Activated CD4-positive, alpha-beta memory T cell treated with anti-CD3 and anti-CD28 coated beads, Interleukin-2, amount 10 ng/mL, durations not matched to agents 7 days and 5 days (primary cell): ENCODE measurements at regions of chr9 and their contacts with region 1.

Region 1: DNA sequence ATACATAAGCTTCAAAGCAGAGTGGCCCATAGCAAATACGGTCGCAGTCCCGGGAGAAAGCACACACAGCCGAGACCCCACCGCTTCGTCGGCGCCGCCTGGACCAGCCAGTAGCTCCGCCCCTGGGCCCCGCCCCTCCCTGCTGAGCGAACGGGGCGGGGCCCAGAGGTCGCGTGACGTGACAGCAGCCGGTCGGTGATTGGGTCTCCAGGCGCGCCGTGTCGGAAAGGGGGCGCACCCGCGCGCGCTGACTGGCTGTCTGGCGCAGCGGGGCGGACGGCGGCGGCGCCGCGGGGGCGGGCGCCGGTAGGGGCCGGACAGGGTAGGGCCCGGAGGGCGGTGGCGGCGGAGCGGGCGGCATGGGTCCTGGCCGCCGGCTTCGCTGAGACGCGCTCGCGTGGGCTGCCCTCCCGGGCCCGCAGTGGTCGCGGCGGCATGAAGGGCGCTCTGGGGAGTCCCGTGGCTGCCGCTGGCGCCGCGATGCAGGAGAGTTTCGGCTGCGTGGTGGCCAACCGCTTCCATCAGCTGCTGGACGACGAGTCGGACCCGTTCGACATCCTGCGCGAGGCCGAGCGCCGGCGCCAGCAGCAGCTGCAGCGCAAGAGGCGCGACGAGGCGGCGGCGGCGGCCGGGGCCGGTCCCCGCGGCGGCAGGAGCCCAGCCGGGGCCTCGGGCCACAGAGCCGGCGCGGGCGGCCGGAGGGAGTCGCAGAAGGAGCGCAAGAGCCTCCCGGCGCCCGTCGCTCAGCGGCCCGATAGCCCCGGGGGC is at the start of gene HABP4:
- DNase-seq: peak; percentile 96
- H3K4me3 Mint-ChIP-seq: peak within 1 kb of the TSS; percentile 85
- H3K27ac Mint-ChIP-seq: peak within 1 kb of the TSS; percentile 44
- H3K4me1 Mint-ChIP-seq: peaks cover 29% of the 10 kb centered on the region
- H3K27me3 Mint-ChIP-seq: peaks cover 11% of the 10 kb centered on the region
- total RNA-seq, gene HABP4: 13.1 to 14.1 TPM

Region 2: GRCh38 chr9:96100385-96101300 is 349.4 kb before region 1 on chr9:
- CTCF ChIA-PET with region 1: no interaction called
- POLR2A ChIA-PET with region 1: no interaction called
- DNase-seq: no peak
- H3K4me3 Mint-ChIP-seq: no peak overlapping the region
- H3K27ac Mint-ChIP-seq: no peak overlapping the region
- H3K4me1 Mint-ChIP-seq: no peaks in the 10 kb centered on the region
- H3K27me3 Mint-ChIP-seq: peaks cover 5% of the 10 kb centered on the region

Region 3: DNA sequence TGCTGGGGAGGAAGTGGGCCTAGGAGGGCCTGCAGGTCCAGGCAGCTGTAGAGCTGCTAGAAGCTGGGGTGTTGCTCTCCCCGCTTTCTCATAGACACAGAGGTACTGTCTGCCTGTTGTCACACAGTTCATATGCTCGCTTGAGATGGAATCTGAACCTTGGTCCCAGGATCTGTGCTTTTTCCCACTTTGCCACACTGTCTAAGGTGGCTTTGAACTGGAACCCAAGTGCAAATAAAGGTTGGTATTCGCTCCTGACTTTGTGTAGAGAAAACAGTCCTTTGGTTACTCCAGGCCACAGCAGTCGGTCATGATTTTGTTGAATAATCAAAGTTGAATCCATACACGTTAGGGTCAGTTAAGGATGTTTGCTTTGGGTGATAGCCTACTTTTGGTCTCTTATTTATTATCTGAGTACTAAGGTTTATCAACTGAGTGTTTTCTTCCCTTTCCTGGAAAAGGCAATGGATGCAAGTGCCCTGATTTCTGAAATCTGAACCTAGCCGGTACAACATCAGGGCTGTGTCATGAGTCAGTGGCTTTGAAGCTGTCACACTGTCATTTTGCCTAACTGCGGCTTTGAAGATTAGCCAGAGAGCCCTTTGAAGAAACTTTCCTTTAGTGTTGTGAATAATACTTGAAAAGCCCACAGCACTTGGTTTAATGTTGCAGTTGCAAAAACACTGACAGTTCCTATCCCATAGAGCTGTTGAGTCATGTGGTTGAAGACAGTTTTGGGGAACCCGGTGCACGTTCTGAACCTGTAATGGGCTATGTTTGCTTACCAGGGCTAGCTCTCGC is 41.2 kb after region 1 on chr9:
- CTCF ChIA-PET with region 1: no interaction called
- POLR2A ChIA-PET with region 1: no interaction called
- DNase-seq: no peak
- H3K4me3 Mint-ChIP-seq: no peak overlapping the region
- H3K27ac Mint-ChIP-seq: no peak overlapping the region
- H3K4me1 Mint-ChIP-seq: peaks cover 5% of the 10 kb centered on the region
- H3K27me3 Mint-ChIP-seq: no peaks in the 10 kb centered on the region

Region 4: DNA sequence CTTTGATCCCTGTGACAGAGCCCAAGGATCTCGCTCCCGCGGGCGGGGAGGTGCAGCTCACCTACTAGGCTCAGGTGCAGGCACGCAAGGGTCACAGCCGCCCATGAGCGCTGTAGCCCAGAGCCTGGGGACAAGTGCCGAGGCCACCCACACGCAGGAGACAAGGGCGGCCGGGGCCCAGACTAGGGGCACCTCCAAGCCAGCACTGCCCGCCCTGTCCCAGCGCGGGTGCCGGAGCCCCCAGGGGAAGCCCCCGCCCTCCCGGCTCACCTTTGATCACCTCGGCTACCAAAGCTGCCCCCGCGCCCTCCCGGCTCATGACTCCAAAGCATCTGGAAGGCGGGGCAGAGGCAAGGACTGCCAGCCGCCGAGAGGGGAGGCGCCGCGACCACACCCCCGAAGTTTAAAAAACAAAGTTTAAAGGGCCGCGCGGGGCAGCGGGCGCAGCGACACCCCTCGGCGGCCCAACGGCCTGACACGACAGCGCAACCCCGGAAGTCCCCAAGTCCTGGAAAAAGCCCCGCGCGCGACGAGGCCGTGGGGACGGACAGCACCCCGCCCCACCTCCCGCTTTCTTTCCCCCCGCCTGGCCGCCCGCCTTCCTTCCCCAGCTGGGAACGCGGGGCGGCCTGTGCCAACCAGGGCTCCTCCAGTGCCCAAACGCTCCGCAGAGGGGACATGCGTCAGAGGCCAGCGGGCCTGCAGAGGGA is 116.6 kb after region 1 on chr9:
- CTCF ChIA-PET with region 1: no interaction called
- POLR2A ChIA-PET with region 1: interaction called, 23 read pairs
- DNase-seq: peak; percentile 80
- H3K4me3 Mint-ChIP-seq: peak overlapping the region; percentile 76
- H3K27ac Mint-ChIP-seq: peak overlapping the region; percentile 73
- H3K4me1 Mint-ChIP-seq: peaks cover 26% of the 10 kb centered on the region
- H3K27me3 Mint-ChIP-seq: peaks cover 1% of the 10 kb centered on the region